ENCODE measurements at regions of chr16 and their contacts with region 1.

Region 1: DNA sequence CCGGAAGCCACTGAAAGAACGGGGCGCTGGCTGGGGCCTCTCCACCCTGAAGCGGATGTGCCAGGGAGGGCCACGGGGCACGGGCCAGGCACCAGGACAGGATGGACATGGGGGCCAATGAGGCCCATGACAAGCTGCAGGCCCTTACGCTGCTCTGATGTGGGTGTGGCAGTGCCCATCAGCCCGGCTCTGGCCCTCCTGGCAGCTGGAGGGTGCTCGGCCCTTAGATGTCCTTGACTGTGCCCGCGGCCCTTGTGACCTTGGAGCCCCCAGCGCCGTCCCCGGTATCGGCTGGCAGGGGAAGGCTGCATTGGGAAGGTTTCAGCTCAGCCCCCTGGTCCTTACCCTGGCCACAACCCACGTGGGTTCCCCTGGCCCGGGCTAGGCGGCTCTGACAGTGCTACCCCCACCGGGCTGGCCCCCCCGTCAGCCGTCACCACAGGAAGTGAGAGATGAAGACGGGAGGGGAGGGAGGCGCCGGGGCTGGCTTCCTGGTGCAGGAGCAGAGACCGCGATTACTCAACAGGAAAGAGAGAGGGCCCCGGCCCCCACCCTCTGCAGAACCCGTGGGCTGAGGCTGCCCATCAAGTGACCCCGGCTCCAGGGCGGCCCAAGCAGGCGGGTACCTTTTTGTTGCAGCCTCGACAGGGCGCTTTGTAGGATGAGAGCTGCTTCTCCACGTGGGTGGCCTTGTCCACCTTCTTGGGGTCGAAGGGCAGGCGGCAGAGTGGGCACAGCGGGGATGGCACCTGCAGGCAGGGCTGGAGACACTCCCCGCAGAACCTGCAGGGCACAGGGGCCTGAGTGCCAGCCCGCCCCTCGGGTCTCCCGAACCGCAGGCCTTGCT is 5.3 kb downstream of the RNF166 start:
- DNase-seq: peak; percentile 98

Region 2: GRCh38 chr16:88655053-88655732 is 45.7 kb before region 1 on chr16:
- intact Hi-C with region 1: loop called (anchors 5 kb)
- DNase-seq: no peak

Region 3: DNA sequence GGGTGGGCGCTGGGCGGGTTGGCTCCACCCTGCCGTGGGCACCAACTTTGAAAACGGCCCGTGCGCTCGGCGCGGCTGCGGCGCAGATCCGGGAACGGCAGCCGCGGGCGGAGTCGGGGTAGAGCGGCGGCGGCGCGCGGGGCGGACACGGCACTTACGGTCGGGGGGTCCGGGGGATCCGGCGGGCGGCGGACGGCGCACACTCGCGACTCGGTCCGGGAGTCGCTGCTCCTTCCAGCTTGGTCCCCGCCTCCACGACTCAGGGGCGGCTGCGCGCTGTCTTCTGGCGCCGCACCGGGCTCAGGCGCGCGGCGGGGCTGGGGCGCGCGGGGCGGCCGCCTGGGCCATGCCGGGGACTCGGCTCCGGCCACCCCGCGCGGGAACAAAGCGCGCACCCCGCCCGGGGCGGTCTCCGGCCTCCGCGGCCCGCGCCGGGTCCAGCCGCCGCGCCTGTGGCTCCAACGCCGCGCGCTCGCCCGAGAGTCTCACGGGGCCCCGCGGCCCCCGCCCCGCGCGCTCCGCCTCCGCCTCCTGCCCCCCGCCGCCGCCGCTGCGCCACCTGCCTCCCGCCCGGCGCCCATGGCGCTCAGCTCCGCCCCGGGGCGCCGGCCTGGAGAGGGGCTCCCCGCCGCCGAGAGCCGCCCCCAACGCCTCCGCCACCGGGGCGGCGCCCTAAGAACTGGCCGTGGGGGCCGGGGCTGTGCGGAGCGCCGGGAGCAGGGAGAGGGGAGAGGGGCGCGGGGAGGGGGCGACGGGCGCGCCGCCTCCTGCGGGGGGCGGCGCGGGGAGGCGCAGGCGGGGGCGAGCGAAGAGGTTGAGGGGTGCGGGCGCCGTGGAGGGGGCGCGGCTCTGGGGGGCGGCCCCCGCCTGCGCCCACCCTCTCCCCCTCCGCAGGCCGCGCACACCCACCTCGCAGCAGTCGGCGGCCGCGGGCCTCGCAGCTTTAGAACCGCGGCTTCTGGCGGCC is 240.3 kb after region 1 on chr16:
- intact Hi-C with region 1: no loop called
- DNase-seq: no peak

Measured in cardiac septum (tissue), 1 donor.